T-cell (primary cell): ENCODE measurements at regions of chr10 and their contacts with region 1.

Region 1: GRCh38 chr10:71893920-71894319 is 42.9 kb upstream of the PSAP start:
- DNase-seq: no peak
- ATAC-seq: no peak
- H3K4me3 ChIP-seq: no peak overlapping the region
- H3K4me3 Mint-ChIP-seq: no peak overlapping the region
- H3K27ac ChIP-seq: no peak overlapping the region
- H3K27ac Mint-ChIP-seq: no peak overlapping the region
- H3K4me1 ChIP-seq: peaks cover 6 to 11% of the 10 kb centered on the region in 2 experiments
- H3K4me1 Mint-ChIP-seq: peaks cover 5 to 16% (median 16%) of the 10 kb centered on the region in 3 donors
- H3K27me3 ChIP-seq: peaks cover 0 to 28% of the 10 kb centered on the region in 2 experiments
- H3K27me3 Mint-ChIP-seq: peaks cover 0 to 9% of the 10 kb centered on the region in 2 donors

Region 2: DNA sequence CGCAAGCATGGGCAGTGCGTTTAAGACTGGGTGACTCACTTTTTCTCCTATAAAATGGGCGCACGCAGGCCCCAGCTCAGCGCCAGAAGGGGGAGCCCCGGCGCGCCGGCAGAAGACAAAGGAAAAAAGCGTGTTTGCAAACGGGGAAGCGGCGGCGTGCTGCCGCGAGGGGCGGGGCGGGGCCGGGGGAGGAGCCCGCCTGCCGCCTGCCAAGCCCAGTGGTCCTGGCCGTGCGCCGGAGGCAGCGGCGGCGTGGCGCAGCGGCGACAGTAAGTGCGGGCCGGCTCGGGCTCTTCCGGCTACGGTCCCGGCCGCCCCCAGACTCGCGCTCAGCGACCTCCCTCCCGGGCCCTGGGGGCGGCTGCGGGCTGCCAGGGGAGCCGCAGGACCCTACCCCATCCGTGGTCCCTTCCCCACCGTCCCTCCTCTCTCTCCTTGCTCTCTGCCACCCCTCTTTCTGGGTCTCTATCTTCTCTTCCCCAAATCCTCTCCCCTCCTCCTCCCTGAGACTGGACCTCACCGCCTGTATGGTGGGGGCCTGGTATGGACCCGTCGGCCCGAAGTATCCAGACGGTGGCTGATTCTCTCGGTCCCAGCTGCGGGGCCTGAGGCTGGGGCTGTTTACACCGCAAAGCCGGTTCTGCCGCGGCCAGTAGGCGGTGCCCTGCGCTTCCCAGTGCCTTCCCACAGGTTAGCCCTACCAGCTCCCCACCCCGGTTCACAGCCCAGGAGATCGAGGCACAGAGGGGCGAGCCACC is 574.7 kb before region 1 on chr10 and contains the start of gene SLC29A3:
- CTCF ChIA-PET with region 1: interaction called in 1 of 2 experiments, 17 read pairs
- POLR2A ChIA-PET with region 1: no interaction called
- DNase-seq: peak; percentile 59 to 90 (median 77)
- ATAC-seq: peak; percentile 90 to 92 (median 91)
- H3K4me3 ChIP-seq: peak within 1 kb of the TSS; percentile 68 to 82
- H3K4me3 Mint-ChIP-seq: peak within 1 kb of the TSS; percentile 94 to 96 (median 95)
- H3K27ac ChIP-seq: peak within 1 kb of the TSS; percentile 54
- H3K27ac Mint-ChIP-seq: peak within 1 kb of the TSS; percentile 86
- H3K4me1 ChIP-seq: peaks cover 0 to 24% of the 10 kb centered on the region in 2 experiments
- H3K4me1 Mint-ChIP-seq: peaks cover 34 to 39% (median 36%) of the 10 kb centered on the region in 3 donors
- H3K27me3 ChIP-seq: no peaks in the 10 kb centered on the region
- H3K27me3 Mint-ChIP-seq: no peaks in the 10 kb centered on the region
- total RNA-seq, gene SLC29A3: 3.3 to 8.8 (median 6.5) TPM

Region 3: GRCh38 chr10:71882813-71883659 is 10.9 kb before region 1 on chr10:
- CTCF ChIA-PET with region 1: interaction called, 3 to 5 read pairs
- POLR2A ChIA-PET with region 1: interaction called, 4 to 11 read pairs
- DNase-seq: no peak
- ATAC-seq: peak in 2 of 4 experiments; percentile 20 to 40
- H3K4me3 ChIP-seq: no peak overlapping the region
- H3K4me3 Mint-ChIP-seq: no peak overlapping the region
- H3K27ac ChIP-seq: no peak overlapping the region
- H3K27ac Mint-ChIP-seq: peak overlapping the region; percentile 1 to 61
- H3K4me1 ChIP-seq: peaks cover 5 to 20% of the 10 kb centered on the region in 2 experiments
- H3K4me1 Mint-ChIP-seq: peaks cover 18 to 26% (median 20%) of the 10 kb centered on the region in 3 donors
- H3K27me3 ChIP-seq: peaks cover 0 to 4% of the 10 kb centered on the region in 2 experiments
- H3K27me3 Mint-ChIP-seq: no peaks in the 10 kb centered on the region